Caco-2 (cell line): ENCODE measurements at regions of chr7 and their contacts with region 1.

Region 1: GRCh38 chr7:80428161-80429054 is 83.5 kb downstream of the GNAT3 start:
- DNase-seq: peak; percentile 39 to 50
- H3K4me3 ChIP-seq: no peak overlapping the region
- H3K4me3 Mint-ChIP-seq: no peak overlapping the region
- H3K27ac Mint-ChIP-seq: no peak overlapping the region
- H3K4me1 ChIP-seq: no peaks in the 10 kb centered on the region
- H3K4me1 Mint-ChIP-seq: no peaks in the 10 kb centered on the region
- H3K27me3 ChIP-seq: no peaks in the 10 kb centered on the region
- H3K27me3 Mint-ChIP-seq: peaks cover 7% of the 10 kb centered on the region
- CTCF ChIP-seq: peak; percentile 64 to 78

Region 2: GRCh38 chr7:79968077-79968648 is 460.2 kb before region 1 on chr7:
- CTCF ChIA-PET with region 1: no interaction called
- POLR2A ChIA-PET with region 1: no interaction called
- intact Hi-C with region 1: no loop called
- DNase-seq: no peak
- H3K4me3 ChIP-seq: no peak overlapping the region
- H3K4me3 Mint-ChIP-seq: no peak overlapping the region
- H3K27ac Mint-ChIP-seq: no peak overlapping the region
- H3K4me1 ChIP-seq: no peaks in the 10 kb centered on the region
- H3K4me1 Mint-ChIP-seq: no peaks in the 10 kb centered on the region
- H3K27me3 ChIP-seq: no peaks in the 10 kb centered on the region
- H3K27me3 Mint-ChIP-seq: no peaks in the 10 kb centered on the region
- CTCF ChIP-seq: no peak

Region 3: DNA sequence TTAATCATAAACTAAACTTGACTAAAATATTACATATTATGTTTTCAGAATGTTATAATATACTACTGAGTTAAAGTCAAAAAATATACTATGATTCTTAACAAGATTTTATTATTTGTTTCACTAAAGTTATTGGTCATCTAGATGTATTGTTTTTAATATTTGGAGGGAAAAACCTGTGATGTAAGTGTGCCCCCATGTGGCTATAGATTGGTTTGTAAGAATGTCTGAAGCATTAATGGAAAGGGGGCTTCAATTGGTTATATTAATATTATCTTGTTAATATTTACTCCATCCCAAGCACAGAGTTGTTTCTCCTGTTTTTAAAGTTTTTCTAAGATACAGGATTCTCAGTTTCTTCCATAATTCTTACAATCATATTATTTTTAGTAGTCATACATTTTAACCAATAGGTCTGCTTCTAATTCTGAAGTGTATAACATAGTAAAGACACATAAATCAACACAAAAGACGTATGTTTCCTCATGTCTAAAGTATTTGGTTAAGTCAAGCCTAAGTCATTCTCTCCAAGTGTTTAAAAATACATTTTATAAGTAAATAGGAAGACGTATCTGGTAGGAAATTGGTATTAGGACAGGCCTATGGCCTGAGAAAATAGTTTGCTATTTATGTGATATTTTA is 25.4 kb after region 1 on chr7:
- CTCF ChIA-PET with region 1: no interaction called
- POLR2A ChIA-PET with region 1: no interaction called
- intact Hi-C with region 1: loop called (anchors 1 kb)
- DNase-seq: peak in 1 of 2 experiments; percentile 13
- H3K4me3 ChIP-seq: no peak overlapping the region
- H3K4me3 Mint-ChIP-seq: no peak overlapping the region
- H3K27ac Mint-ChIP-seq: no peak overlapping the region
- H3K4me1 ChIP-seq: peaks cover 14% of the 10 kb centered on the region; the same call in 1 of the 2 replicates
- H3K4me1 Mint-ChIP-seq: no peaks in the 10 kb centered on the region
- H3K27me3 ChIP-seq: no peaks in the 10 kb centered on the region
- H3K27me3 Mint-ChIP-seq: no peaks in the 10 kb centered on the region
- CTCF ChIP-seq: peak; percentile 48 to 49

Region 4: GRCh38 chr7:80630605-80631405 is 202.4 kb after region 1 on chr7:
- CTCF ChIA-PET with region 1: no interaction called
- POLR2A ChIA-PET with region 1: no interaction called
- intact Hi-C with region 1: no loop called
- DNase-seq: no peak
- H3K4me3 ChIP-seq: no peak overlapping the region
- H3K4me3 Mint-ChIP-seq: no peak overlapping the region
- H3K27ac Mint-ChIP-seq: no peak overlapping the region
- H3K4me1 ChIP-seq: no peaks in the 10 kb centered on the region
- H3K4me1 Mint-ChIP-seq: no peaks in the 10 kb centered on the region
- H3K27me3 ChIP-seq: no peaks in the 10 kb centered on the region
- H3K27me3 Mint-ChIP-seq: peaks cover 3% of the 10 kb centered on the region
- CTCF ChIP-seq: no peak

Region 5: GRCh38 chr7:80659120-80660055 is 231.0 kb after region 1 on chr7:
- CTCF ChIA-PET with region 1: no interaction called
- POLR2A ChIA-PET with region 1: no interaction called
- intact Hi-C with region 1: loop called (anchors 1 kb)
- DNase-seq: no peak
- H3K4me3 ChIP-seq: no peak overlapping the region
- H3K4me3 Mint-ChIP-seq: no peak overlapping the region
- H3K27ac Mint-ChIP-seq: no peak overlapping the region
- H3K4me1 ChIP-seq: no peaks in the 10 kb centered on the region
- H3K4me1 Mint-ChIP-seq: no peaks in the 10 kb centered on the region
- H3K27me3 ChIP-seq: no peaks in the 10 kb centered on the region
- H3K27me3 Mint-ChIP-seq: peaks cover 13% of the 10 kb centered on the region
- CTCF ChIP-seq: peak; percentile 25 to 43

Region 6: DNA sequence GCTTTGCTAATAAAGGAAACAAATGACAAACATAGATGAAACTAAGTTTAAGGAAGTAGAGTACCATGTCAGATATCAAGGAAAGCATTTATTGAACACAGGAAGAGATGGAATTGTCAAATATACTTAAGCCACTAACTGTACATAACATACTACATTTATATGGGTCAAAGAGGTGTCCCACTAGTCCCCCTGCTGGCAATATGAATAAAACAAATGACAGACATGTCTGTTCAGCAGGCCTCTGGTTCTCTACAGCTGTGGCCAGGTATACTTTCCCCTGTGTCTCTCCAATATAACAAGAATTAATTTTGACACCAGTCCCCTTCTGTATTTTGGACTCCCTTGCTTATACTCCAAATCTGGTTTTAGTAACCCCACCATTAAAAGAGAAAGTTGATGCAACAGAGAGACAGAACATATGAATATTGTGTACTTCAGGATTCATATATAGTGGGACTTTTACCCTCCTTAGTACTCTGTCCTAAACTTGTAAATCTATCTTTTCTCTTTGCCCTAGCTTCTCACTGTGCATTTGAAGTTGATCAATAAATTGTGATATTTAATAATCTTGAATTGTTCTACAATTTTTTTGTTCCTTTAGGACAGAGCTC is 253.0 kb after region 1 on chr7:
- CTCF ChIA-PET with region 1: no interaction called
- POLR2A ChIA-PET with region 1: no interaction called
- intact Hi-C with region 1: loop called (anchors 1 kb)
- DNase-seq: peak in 1 of 2 experiments; percentile 40
- H3K4me3 ChIP-seq: no peak overlapping the region
- H3K4me3 Mint-ChIP-seq: no peak overlapping the region
- H3K27ac Mint-ChIP-seq: no peak overlapping the region
- H3K4me1 ChIP-seq: no peaks in the 10 kb centered on the region; the same call in none of the 2 replicates
- H3K4me1 Mint-ChIP-seq: no peaks in the 10 kb centered on the region
- H3K27me3 ChIP-seq: no peaks in the 10 kb centered on the region
- H3K27me3 Mint-ChIP-seq: no peaks in the 10 kb centered on the region
- CTCF ChIP-seq: peak; percentile 44 to 52

Region 7: DNA sequence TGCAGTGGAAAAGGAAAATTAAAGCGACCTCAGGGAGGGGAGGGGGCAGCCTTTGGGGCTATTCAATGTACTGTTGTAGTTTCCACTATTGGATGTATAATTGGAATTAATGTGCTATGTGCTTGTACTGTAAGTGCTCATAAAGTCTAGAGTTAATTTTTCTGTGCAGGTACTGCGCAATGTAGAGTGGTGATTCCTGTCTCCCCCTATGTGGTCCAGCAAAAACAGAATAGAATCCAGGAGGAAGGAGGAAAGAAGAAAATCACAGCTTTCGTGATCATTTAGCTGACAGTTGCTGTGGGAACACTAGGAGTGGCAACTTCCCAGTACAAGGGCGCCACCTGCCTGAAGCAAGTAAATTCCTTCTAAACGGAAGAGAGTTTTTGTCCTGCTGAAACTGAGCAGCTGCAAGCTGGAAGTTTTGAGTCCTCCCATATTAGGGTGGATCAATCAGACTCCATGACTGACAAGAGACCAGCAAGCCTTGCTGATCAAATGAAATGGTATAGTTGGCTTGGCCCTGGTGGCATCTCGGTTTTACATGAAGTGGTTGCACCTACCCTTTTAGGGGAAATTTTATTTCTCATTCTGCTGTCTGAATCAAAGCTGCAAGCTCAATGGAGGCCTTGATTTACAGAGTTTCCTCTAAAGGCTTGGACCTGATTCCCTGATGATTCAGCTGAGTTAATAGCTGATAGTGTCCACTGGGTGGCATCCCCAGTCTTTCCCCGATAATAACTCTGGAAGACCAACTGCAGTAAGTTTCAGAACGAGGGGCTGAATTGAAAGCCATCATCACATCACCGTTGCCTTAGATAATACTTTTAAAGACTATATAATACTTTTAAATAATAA is 1041.7 kb after region 1 on chr7:
- CTCF ChIA-PET with region 1: no interaction called
- POLR2A ChIA-PET with region 1: no interaction called
- intact Hi-C with region 1: loop called (anchors 1 kb)
- DNase-seq: peak; percentile 77
- H3K4me3 ChIP-seq: no peak overlapping the region
- H3K4me3 Mint-ChIP-seq: no peak overlapping the region
- H3K27ac Mint-ChIP-seq: no peak overlapping the region
- H3K4me1 ChIP-seq: peaks cover 11% of the 10 kb centered on the region
- H3K4me1 Mint-ChIP-seq: peaks cover 26% of the 10 kb centered on the region
- H3K27me3 ChIP-seq: no peaks in the 10 kb centered on the region
- H3K27me3 Mint-ChIP-seq: no peaks in the 10 kb centered on the region
- CTCF ChIP-seq: peak; percentile 77 to 79